Left lung (tissue), 14 donors: ENCODE measurements at regions of chr3 and their contacts with region 1.

Region 1: GRCh38 chr3:72821161-72821781 is 27.0 kb downstream of the SHQ1 start:
- DNase-seq: peak in 1 of 4 donors; percentile 57
- ATAC-seq: peak; percentile 11
- H3K4me3 ChIP-seq: no peak overlapping the region
- H3K27ac ChIP-seq: no peak overlapping the region
- H3K4me1 ChIP-seq: peaks cover 3 to 27% of the 10 kb centered on the region in 2 donors
- H3K27me3 ChIP-seq: no peaks in the 10 kb centered on the region
- CTCF ChIP-seq: no peak

Region 2: DNA sequence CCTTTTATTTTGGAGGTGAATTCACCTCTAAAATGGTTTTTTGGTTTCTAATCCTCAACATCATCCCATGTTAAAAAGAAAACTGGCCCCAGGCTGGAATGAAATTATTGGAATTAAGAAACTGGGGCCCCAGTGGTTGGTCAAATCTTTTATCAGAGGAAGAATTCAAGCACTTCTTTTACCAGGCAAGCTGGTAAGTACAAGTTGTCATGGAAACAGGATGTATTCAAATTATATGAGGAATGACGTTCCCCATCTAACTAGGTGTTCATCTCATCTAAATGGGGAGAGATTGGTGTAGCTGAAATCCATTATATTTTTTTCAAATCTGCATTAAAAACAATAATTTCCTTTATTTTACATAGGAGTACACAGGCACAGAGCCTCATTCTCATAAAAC is 1086.4 kb before region 1 on chr3:
- intact Hi-C with region 1: loop called in 1 of 2 experiments (anchors 10 kb)
- DNase-seq: no peak
- ATAC-seq: no peak
- H3K4me3 ChIP-seq: no peak overlapping the region
- H3K27ac ChIP-seq: no peak overlapping the region
- H3K4me1 ChIP-seq: peaks cover 0 to 8% of the 10 kb centered on the region in 2 donors
- H3K27me3 ChIP-seq: no peaks in the 10 kb centered on the region
- CTCF ChIP-seq: no peak

Region 3: GRCh38 chr3:71873093-71873611 is 948.1 kb before region 1 on chr3:
- intact Hi-C with region 1: loop called in 1 of 2 experiments (anchors 5 kb)
- DNase-seq: no peak
- ATAC-seq: peak; percentile 12
- H3K4me3 ChIP-seq: no peak overlapping the region
- H3K27ac ChIP-seq: no peak overlapping the region
- H3K4me1 ChIP-seq: peaks cover 0 to 16% of the 10 kb centered on the region in 2 donors
- H3K27me3 ChIP-seq: no peaks in the 10 kb centered on the region
- CTCF ChIP-seq: no peak

Region 4: GRCh38 chr3:72924055-72924454 is 102.8 kb after region 1 on chr3:
- intact Hi-C with region 1: no loop called
- DNase-seq: no peak
- ATAC-seq: no peak
- H3K4me3 ChIP-seq: no peak overlapping the region
- H3K27ac ChIP-seq: no peak overlapping the region
- H3K4me1 ChIP-seq: no peaks in the 10 kb centered on the region
- H3K27me3 ChIP-seq: no peaks in the 10 kb centered on the region
- CTCF ChIP-seq: no peak